Heart right ventricle (tissue), 16 donors: ENCODE measurements at regions of chr15 and their contacts with region 1.

Region 1: DNA sequence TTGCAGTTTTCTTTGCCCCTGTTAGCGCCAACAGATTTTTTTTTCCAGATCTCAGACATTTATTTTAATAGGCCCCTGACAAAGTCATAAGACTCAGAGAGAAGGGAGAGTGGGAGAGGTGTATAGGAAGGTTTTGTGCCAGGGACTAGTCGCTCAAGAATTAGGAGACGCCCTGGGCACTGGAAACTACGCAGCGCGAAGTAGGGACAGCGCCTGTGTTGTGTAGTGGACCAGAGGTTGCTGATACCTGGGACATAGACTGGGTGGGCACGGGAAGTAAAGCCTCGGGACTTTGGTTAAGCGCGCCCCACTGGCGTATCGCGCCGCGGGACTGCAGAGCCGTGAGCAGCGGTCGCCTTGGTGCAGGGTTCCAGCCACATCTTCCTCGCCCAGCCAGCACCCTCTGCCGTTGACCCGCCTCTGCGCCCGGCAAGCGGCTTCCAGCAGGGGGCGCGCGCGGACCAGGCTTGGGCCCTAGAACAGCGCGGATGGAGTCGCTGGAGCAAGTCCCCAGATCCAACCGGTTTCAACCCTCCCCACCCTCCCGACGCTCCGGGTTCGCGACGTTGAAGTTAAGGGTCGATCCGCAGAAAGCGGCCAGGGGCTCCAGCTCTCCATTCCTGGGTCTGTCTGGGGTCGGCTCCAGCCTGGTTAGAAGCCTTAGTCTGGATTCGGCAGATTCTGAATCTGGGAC is 3.0 kb upstream of the ISLR2 start:
- DNase-seq: peak; percentile 90 to 92
- ATAC-seq: peak; percentile 93 to 96 (median 95)
- H3K4me3 ChIP-seq: peak overlapping the region in 9 of 10 donors; percentile 33 to 64 (median 55)
- H3K27ac ChIP-seq: peak overlapping the region in 8 of 10 donors; percentile 50 to 89 (median 80)
- H3K4me1 ChIP-seq: peaks cover 3 to 53% (median 40%) of the 10 kb centered on the region in 9 donors
- H3K27me3 ChIP-seq: peaks cover 0 to 90% (median 75%) of the 10 kb centered on the region in 7 donors
- CTCF ChIP-seq: peak; percentile 98 to 100 (median 99)

Region 2: DNA sequence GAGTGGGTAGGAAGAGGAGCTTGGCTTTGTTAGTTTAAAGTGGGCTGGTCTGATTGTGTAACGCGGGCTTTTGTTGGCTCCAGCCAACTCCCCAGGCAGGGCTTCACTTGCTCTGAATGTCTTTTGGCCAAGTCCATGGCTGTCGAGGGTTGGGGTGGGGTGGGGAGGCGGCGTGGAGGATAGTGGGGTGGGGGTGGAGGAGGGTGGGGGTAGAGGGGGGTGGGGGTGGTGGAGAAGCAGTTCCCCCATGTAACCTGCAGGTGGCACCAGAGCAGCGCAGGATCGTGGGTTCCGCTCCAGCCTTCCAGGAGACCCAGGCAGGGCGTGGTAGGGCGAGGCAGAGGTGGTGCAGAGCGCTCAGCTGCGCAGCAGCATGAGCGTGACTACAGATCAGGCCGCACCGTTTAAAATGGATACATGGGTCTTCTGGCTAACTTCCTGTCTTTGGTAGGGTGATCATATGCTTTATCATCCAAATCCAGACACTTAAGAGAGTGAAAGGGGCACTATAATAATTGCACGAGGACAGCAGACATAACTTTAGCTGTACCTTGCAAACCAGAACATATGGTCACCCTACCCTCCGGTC is 73.4 kb before region 1 on chr15:
- intact Hi-C with region 1: loop called in 1 of 10 experiments (anchors 5 kb)
- DNase-seq: peak; percentile 58 to 76
- ATAC-seq: peak; percentile 68 to 86 (median 72)
- H3K4me3 ChIP-seq: peak overlapping the region in 2 of 10 donors; percentile 12 to 16
- H3K27ac ChIP-seq: peak overlapping the region in 3 of 10 donors; percentile 35 to 52 (median 35)
- H3K4me1 ChIP-seq: peaks cover 5 to 42% (median 22%) of the 10 kb centered on the region in 9 donors
- H3K27me3 ChIP-seq: no peaks in the 10 kb centered on the region
- CTCF ChIP-seq: peak; percentile 31 to 69 (median 60)

Region 3: DNA sequence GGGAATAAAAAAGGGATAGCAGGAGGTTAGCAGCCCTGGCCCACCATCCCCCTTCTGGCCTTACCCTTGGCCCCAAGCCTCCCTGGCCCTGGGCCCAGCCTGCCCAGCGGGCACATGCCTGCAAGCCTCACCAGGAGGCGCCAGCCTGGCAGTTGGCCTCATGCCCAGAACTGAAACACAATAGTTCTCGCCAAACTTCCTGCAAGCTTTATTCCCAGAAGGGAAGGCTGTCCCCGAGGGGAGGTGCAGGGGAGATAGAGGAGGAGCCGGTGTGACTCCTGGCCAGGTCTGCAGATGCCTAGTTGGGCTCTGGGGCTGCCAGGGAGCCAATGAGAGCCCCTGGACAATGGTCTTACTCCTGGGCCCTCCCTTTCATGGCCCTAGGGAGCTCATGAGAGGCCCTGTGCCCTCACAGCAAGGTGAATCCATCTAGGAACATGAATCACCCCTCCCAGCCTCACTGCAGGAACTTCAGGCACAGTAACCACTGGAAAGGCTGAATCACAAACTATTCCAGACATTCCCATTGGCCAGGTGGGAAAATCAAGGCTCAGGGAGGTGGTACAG is 112.7 kb after region 1 on chr15:
- intact Hi-C with region 1: loop called in 3 of 10 experiments (anchors 5 to 10 kb)
- DNase-seq: peak; percentile 88 to 91
- ATAC-seq: peak; percentile 83 to 95 (median 90)
- H3K4me3 ChIP-seq: no peak overlapping the region
- H3K27ac ChIP-seq: peak overlapping the region in 9 of 10 donors; percentile 26 to 75 (median 61)
- H3K4me1 ChIP-seq: peaks cover 23 to 43% (median 39%) of the 10 kb centered on the region in 9 donors
- H3K27me3 ChIP-seq: peaks cover 0 to 7% (median 0%) of the 10 kb centered on the region in 7 donors
- CTCF ChIP-seq: peak in 8 of 9 donors; percentile 29 to 70 (median 52)

Region 4: GRCh38 chr15:74307827-74308644 is 180.6 kb after region 1 on chr15:
- intact Hi-C with region 1: loop called (anchors 1 to 5 kb)
- DNase-seq: peak; percentile 41 to 66
- ATAC-seq: peak; percentile 76 to 87 (median 82)
- H3K4me3 ChIP-seq: no peak overlapping the region
- H3K27ac ChIP-seq: no peak overlapping the region
- H3K4me1 ChIP-seq: peaks cover 0 to 8% (median 0%) of the 10 kb centered on the region in 9 donors
- H3K27me3 ChIP-seq: peaks cover 0 to 55% (median 32%) of the 10 kb centered on the region in 7 donors
- CTCF ChIP-seq: peak; percentile 45 to 79 (median 75)